ENCODE measurements at regions of chr3 and their contacts with region 1.

Region 1: DNA sequence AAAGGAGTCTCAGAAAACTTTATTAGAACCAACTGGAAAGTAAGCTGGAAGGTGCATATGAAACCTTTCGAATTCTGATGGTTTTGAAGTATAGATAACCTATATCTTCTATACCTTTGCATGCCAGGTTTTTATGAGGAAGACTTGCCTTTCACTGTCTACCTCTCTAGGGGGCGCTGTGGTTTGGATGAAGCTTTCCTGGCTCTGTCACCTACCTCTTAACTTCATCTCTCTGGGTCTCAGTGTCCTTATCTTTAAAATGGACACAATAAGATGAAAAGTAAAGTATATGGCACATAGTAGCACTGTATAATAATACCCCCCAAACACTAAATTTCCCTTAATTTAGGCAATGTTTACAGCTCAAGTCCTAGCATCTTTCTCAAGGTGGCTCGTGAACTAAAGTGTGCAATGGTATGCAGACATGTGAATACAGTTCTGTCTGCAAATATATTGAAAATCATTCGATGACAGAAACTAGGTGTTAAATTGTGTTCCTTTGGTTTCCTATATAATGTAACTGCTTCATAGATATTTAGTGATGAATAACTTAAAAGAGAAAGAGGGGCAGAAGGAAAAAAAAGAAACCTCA is 314.3 kb downstream of the CHST2 start:
- DNase-seq: no peak
- ATAC-seq: no peak
- H3K4me3 Mint-ChIP-seq: no peak overlapping the region
- H3K27ac Mint-ChIP-seq: no peak overlapping the region
- H3K4me1 Mint-ChIP-seq: peaks cover 24% of the 10 kb centered on the region
- H3K27me3 Mint-ChIP-seq: no peaks in the 10 kb centered on the region
- CTCF ChIP-seq: no peak

Region 2: GRCh38 chr3:142275856-142276255 is 1158.0 kb before region 1 on chr3:
- CTCF ChIA-PET with region 1: no interaction called
- POLR2A ChIA-PET with region 1: no interaction called
- intact Hi-C with region 1: no loop called
- DNase-seq: no peak
- ATAC-seq: no peak
- H3K4me3 Mint-ChIP-seq: no peak overlapping the region
- H3K27ac Mint-ChIP-seq: no peak overlapping the region
- H3K4me1 Mint-ChIP-seq: no peaks in the 10 kb centered on the region
- H3K27me3 Mint-ChIP-seq: no peaks in the 10 kb centered on the region
- CTCF ChIP-seq: no peak

Region 3: GRCh38 chr3:142808103-142808917 is 625.6 kb before region 1 on chr3:
- CTCF ChIA-PET with region 1: no interaction called
- POLR2A ChIA-PET with region 1: no interaction called
- intact Hi-C with region 1: no loop called
- DNase-seq: no peak
- ATAC-seq: no peak
- H3K4me3 Mint-ChIP-seq: no peak overlapping the region
- H3K27ac Mint-ChIP-seq: no peak overlapping the region
- H3K4me1 Mint-ChIP-seq: no peaks in the 10 kb centered on the region
- H3K27me3 Mint-ChIP-seq: peaks cover 4% of the 10 kb centered on the region
- CTCF ChIP-seq: no peak

Region 4: GRCh38 chr3:143412084-143412483 is 21.8 kb before region 1 on chr3:
- CTCF ChIA-PET with region 1: no interaction called
- POLR2A ChIA-PET with region 1: no interaction called
- intact Hi-C with region 1: loop called (anchors 2 kb)
- DNase-seq: no peak
- ATAC-seq: peak; percentile 18
- H3K4me3 Mint-ChIP-seq: no peak overlapping the region
- H3K27ac Mint-ChIP-seq: no peak overlapping the region
- H3K4me1 Mint-ChIP-seq: peaks cover 40% of the 10 kb centered on the region
- H3K27me3 Mint-ChIP-seq: no peaks in the 10 kb centered on the region
- CTCF ChIP-seq: no peak